CD8-positive, alpha-beta T cell (primary cell): ENCODE measurements at regions of chr5 and their contacts with region 1.

Region 1: GRCh38 chr5:43602461-43603343 is at the start of gene NNT:
- DNase-seq: peak; percentile 46 to 87 (median 78)
- ATAC-seq: peak; percentile 71
- H3K4me3 ChIP-seq: peak within 1 kb of the TSS; percentile 95 to 98
- H3K4me3 Mint-ChIP-seq: peak within 1 kb of the TSS; percentile 89
- H3K27ac ChIP-seq: peak within 1 kb of the TSS; percentile 85 to 88
- H3K27ac Mint-ChIP-seq: peak within 1 kb of the TSS; percentile 92
- H3K4me1 ChIP-seq: peaks cover 14% of the 10 kb centered on the region
- H3K4me1 Mint-ChIP-seq: peaks cover 59% of the 10 kb centered on the region
- H3K27me3 ChIP-seq: no peaks in the 10 kb centered on the region
- H3K27me3 Mint-ChIP-seq: no peaks in the 10 kb centered on the region
- CTCF ChIP-seq: no peak
- total RNA-seq, gene NNT: 19.4 to 20.2 TPM

Region 2: DNA sequence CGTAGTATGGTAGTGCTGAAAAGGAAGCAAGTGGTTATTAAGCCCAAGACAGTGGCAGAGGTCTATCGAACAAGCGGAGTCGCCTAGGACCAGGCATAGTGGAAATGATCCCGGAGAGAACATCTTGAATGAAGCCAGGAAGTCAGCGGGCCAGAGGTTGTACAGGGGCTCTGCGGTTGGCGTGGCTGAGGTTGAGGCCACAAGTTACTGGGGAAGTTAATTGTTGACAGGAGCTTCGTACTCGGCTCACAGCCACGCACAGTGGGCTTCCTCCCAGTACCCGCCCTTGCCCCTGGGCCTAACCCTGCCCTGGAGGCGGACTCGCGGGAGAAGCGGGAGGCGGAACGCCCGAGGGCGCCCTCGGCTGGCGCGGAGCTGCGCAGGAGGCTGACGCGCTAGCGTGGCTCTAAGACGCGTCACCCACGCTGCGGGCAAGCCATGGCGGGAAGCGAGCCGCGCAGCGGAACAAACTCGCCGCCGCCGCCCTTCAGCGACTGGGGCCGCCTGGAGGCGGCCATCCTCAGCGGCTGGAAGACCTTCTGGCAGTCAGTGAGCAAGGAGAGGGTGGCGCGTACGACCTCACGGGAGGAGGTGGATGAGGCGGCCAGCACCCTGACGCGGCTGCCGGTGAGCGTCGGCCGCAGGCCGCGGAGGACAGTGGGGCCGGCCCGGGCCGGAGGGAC is 1677.7 kb before region 1 on chr5 and contains the start of gene FBXO4:
- CTCF ChIA-PET with region 1: no interaction called
- POLR2A ChIA-PET with region 1: no interaction called
- intact Hi-C with region 1: loop called in 1 of 2 experiments (anchors 10 kb)
- DNase-seq: peak; percentile 79 to 96 (median 88)
- ATAC-seq: peak; percentile 96
- H3K4me3 ChIP-seq: peak within 1 kb of the TSS; percentile 79 to 87
- H3K4me3 Mint-ChIP-seq: peak within 1 kb of the TSS; percentile 87
- H3K27ac ChIP-seq: peak within 1 kb of the TSS; percentile 91 to 98
- H3K27ac Mint-ChIP-seq: peak within 1 kb of the TSS; percentile 99
- H3K4me1 ChIP-seq: peaks cover 16% of the 10 kb centered on the region
- H3K4me1 Mint-ChIP-seq: peaks cover 28% of the 10 kb centered on the region
- H3K27me3 ChIP-seq: no peaks in the 10 kb centered on the region
- H3K27me3 Mint-ChIP-seq: no peaks in the 10 kb centered on the region
- CTCF ChIP-seq: peak; percentile 57
- total RNA-seq, gene FBXO4: 4.4 to 4.7 TPM

Region 3: GRCh38 chr5:43073597-43074546 is 528.8 kb before region 1 on chr5:
- CTCF ChIA-PET with region 1: no interaction called
- POLR2A ChIA-PET with region 1: no interaction called
- intact Hi-C with region 1: loop called in 1 of 2 experiments (anchors 10 kb)
- DNase-seq: peak in 7 of 9 experiments; percentile 22 to 77 (median 56)
- ATAC-seq: peak; percentile 92
- H3K4me3 ChIP-seq: no peak overlapping the region
- H3K4me3 Mint-ChIP-seq: no peak overlapping the region
- H3K27ac ChIP-seq: no peak overlapping the region
- H3K27ac Mint-ChIP-seq: no peak overlapping the region
- H3K4me1 ChIP-seq: peaks cover 16% of the 10 kb centered on the region
- H3K4me1 Mint-ChIP-seq: peaks cover 52% of the 10 kb centered on the region
- H3K27me3 ChIP-seq: no peaks in the 10 kb centered on the region
- H3K27me3 Mint-ChIP-seq: no peaks in the 10 kb centered on the region
- CTCF ChIP-seq: peak; percentile 68

Region 4: DNA sequence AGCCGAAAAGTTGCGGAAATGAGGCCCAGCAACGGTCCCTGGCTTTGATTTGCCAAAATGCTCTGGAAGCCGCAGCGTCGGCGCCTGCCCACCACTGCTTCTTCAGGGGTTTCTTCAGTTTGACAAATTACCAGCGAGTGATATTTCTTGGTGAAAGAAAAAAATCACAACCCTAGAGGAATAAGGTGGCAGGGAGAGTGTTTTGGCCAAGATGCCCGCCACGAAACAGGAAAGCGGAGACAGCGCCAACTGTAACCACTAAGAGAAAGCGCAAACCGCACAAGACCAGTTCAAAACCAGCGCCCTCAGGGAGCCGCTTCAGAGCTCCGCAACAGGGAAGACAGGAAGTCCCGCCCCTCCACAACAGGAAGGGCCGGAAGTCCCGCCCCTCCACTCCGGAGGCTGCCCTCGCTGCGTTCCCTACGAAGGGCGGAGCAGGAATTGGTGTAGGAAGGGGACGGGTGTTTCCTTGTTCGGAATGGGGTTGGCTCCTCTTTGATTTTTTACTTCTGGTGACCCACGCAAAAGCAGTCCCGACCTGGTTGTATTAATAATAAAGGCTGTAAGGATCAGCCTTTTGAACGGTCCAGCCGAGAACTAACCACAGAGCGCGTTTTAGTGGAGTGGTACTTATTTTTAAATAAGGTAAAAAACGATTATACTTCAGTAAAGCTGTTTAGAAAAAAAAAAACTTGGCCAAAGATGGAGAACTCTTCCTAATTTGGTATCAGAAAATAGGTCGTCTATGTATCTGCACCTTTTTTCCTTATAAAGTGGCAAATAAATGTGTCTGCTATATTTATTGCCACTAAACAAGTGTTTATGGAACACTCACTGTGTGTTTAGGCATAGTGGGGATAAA is 87.7 kb before region 1 on chr5 and contains the start of gene C5orf34:
- CTCF ChIA-PET with region 1: no interaction called
- POLR2A ChIA-PET with region 1: no interaction called
- intact Hi-C with region 1: loop called in 1 of 2 experiments (anchors 2 kb)
- DNase-seq: peak; percentile 84 to 97 (median 95)
- ATAC-seq: peak; percentile 86
- H3K4me3 ChIP-seq: peak within 1 kb of the TSS; percentile 68 to 77
- H3K4me3 Mint-ChIP-seq: peak within 1 kb of the TSS; percentile 97
- H3K27ac ChIP-seq: peak within 1 kb of the TSS; percentile 82
- H3K27ac Mint-ChIP-seq: peak within 1 kb of the TSS; percentile 95
- H3K4me1 ChIP-seq: peaks cover 15% of the 10 kb centered on the region
- H3K4me1 Mint-ChIP-seq: peaks cover 31% of the 10 kb centered on the region
- H3K27me3 ChIP-seq: no peaks in the 10 kb centered on the region
- H3K27me3 Mint-ChIP-seq: no peaks in the 10 kb centered on the region
- CTCF ChIP-seq: no peak
- total RNA-seq, gene C5orf34: 0.61 to 0.95 TPM

Region 5: GRCh38 chr5:43556857-43557542 is 45.7 kb before region 1 on chr5 and contains the start of gene PAIP1:
- CTCF ChIA-PET with region 1: interaction called, 7 read pairs
- POLR2A ChIA-PET with region 1: interaction called, 12 read pairs
- intact Hi-C with region 1: loop called (anchors 1 kb)
- DNase-seq: peak; percentile 67 to 92 (median 83)
- ATAC-seq: peak; percentile 81
- H3K4me3 ChIP-seq: peak within 1 kb of the TSS; percentile 73 to 88
- H3K4me3 Mint-ChIP-seq: peak within 1 kb of the TSS; percentile 90
- H3K27ac ChIP-seq: peak within 1 kb of the TSS; percentile 82 to 93
- H3K27ac Mint-ChIP-seq: peak within 1 kb of the TSS; percentile 97
- H3K4me1 ChIP-seq: peaks cover 45% of the 10 kb centered on the region
- H3K4me1 Mint-ChIP-seq: peaks cover 13% of the 10 kb centered on the region
- H3K27me3 ChIP-seq: no peaks in the 10 kb centered on the region
- H3K27me3 Mint-ChIP-seq: peaks cover 2% of the 10 kb centered on the region
- CTCF ChIP-seq: peak; percentile 77
- total RNA-seq, gene PAIP1: 40.3 to 45.7 TPM

Region 6: GRCh38 chr5:43631182-43631910 is 28.6 kb after region 1 on chr5:
- CTCF ChIA-PET with region 1: interaction called, 5 read pairs
- POLR2A ChIA-PET with region 1: interaction called, 4 read pairs
- intact Hi-C with region 1: loop called in 1 of 2 experiments (anchors 1 kb)
- DNase-seq: peak in 6 of 9 experiments; percentile 21 to 73 (median 42)
- ATAC-seq: peak; percentile 82
- H3K4me3 ChIP-seq: no peak overlapping the region
- H3K4me3 Mint-ChIP-seq: no peak overlapping the region
- H3K27ac ChIP-seq: no peak overlapping the region
- H3K27ac Mint-ChIP-seq: no peak overlapping the region
- H3K4me1 ChIP-seq: no peaks in the 10 kb centered on the region
- H3K4me1 Mint-ChIP-seq: peaks cover 29% of the 10 kb centered on the region
- H3K27me3 ChIP-seq: no peaks in the 10 kb centered on the region
- H3K27me3 Mint-ChIP-seq: no peaks in the 10 kb centered on the region
- CTCF ChIP-seq: peak; percentile 65

Region 7: DNA sequence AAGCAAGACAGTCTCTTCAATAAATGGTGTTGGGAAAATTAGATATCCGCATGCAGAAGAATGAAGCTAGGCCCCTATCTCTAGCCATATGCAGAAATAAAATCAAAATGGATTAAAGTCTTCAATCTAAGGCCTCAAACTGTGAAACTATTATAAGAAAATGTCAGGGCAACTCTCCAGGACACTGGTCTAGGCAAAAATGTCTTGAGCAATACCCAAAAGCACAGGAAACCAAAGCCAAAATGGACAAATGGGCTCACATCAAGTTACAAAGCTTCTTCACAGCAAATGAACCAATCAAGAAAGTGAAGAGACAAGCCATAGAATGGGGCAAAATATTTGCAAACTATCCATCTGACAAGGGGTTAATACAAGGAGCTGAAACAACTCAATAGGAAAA is 339.1 kb after region 1 on chr5:
- CTCF ChIA-PET with region 1: no interaction called
- POLR2A ChIA-PET with region 1: no interaction called
- intact Hi-C with region 1: no loop called
- DNase-seq: no peak
- ATAC-seq: no peak
- H3K4me3 ChIP-seq: no peak overlapping the region
- H3K4me3 Mint-ChIP-seq: no peak overlapping the region
- H3K27ac ChIP-seq: no peak overlapping the region
- H3K27ac Mint-ChIP-seq: no peak overlapping the region
- H3K4me1 ChIP-seq: no peaks in the 10 kb centered on the region
- H3K4me1 Mint-ChIP-seq: no peaks in the 10 kb centered on the region
- H3K27me3 ChIP-seq: no peaks in the 10 kb centered on the region
- H3K27me3 Mint-ChIP-seq: no peaks in the 10 kb centered on the region
- CTCF ChIP-seq: no peak